Psoas muscle (tissue), 8 donors: ENCODE measurements at regions of chr20 and their contacts with region 1.

Region 1: DNA sequence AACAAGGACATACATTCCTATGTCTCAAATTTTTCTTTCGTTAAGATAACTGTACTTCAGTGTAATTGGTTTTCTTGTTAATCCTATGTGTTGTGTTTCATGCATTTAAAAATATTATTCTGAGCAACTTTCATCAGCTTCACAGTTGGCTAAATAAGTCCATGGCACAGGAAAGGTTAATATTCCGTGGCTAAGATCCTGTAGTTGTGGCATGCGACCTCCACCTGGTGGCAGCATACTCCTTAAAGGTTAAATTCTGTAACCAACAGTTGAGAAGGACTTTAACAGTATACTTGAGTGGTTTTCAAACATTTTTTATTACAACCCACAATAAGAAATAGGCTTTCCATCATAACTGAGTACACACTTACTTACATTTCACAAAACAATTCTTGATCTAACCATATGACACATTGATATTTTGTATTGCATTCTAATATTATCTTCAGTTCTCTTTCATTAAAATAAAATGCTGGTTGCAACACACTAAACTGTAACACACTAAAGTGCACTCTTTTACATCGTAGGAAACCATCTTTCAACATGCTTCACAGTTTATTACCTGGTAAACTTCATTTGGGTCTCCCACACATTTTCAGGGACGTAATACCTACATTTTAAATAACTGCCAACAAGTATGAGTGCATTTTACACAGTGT is 118.3 kb downstream of the SLX4IP start:
- DNase-seq: peak; percentile 63 to 79
- ATAC-seq: peak; percentile 67 to 89 (median 78)
- H3K4me3 ChIP-seq: no peak overlapping the region
- H3K27ac ChIP-seq: no peak overlapping the region
- H3K4me1 ChIP-seq: peaks cover 3% of the 10 kb centered on the region
- H3K27me3 ChIP-seq: no peaks in the 10 kb centered on the region
- CTCF ChIP-seq: peak; percentile 82

Region 2: DNA sequence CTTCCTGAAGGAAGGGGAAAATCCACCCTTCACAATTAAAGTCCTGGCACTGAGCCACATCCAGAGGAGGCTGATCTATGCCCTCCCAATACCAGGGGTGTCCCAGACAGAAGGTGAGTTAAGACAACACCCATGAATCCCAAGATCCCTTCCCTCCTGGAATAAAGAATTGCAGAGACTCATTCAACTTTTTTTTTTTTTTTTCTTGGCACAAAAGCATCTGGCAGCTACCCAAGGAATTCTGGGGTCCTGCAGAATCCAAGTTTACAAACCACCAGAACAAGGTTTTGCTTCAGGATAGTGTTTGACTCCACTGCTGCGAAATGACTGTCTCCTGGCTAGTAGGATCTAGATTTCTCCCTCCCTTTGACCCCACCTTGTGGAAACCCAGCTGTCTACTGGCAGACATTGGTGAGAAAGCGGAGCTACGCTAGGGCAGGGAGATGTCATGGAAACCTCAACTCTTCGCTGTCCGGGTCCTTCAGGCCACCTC is 82.9 kb after region 1 on chr20:
- intact Hi-C with region 1: no loop called
- DNase-seq: no peak
- ATAC-seq: peak; percentile 26 to 60 (median 46)
- H3K4me3 ChIP-seq: no peak overlapping the region
- H3K27ac ChIP-seq: peak overlapping the region; percentile 38
- H3K4me1 ChIP-seq: peaks cover 19% of the 10 kb centered on the region
- H3K27me3 ChIP-seq: no peaks in the 10 kb centered on the region
- CTCF ChIP-seq: no peak

Region 3: DNA sequence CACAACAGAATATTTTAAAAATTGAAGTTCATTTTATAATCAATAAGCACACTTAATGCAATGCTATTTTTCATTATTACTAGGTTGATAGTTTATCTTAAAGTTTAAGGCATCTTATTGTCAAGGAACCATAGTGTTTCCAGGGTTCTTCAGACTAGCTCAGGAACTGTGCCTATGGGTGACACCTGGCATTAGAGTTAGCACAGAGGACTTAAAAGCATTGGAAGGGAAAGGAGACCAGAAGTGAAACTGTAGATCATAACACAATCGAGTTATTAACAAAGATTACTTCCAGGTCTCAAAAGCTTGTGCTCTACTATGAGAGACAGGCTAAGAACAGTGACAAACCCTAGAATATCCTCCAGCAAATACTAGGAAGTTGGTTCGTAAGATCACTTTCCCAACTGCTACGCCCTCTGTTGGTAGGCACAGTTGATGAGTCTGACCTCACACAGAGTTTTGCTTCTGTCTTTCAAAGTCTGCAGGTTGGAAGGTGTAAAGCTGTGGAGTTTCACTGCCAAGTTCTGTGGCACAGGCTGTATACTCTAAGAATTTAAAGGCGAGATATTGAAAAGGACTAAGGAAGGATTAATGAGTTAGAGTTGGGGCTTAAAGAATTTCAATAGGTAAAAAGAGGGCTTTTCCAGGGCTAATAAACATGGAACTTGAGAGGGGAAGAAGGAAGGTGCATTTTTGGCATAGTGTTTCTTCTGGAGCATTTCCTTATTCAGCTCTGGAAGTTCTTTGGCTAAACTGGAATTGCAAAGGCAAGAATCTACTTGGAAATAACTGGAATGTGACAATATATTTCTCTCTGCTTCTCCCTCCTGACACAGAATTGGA is 651.7 kb after region 1 on chr20:
- intact Hi-C with region 1: loop called (anchors 5 to 10 kb)
- DNase-seq: peak; percentile 30 to 52
- ATAC-seq: peak; percentile 84 to 96 (median 91)
- H3K4me3 ChIP-seq: no peak overlapping the region
- H3K27ac ChIP-seq: no peak overlapping the region
- H3K4me1 ChIP-seq: no peaks in the 10 kb centered on the region
- H3K27me3 ChIP-seq: no peaks in the 10 kb centered on the region
- CTCF ChIP-seq: peak; percentile 76